ENCODE measurements at regions of chr18 and their contacts with region 1.

Region 1: DNA sequence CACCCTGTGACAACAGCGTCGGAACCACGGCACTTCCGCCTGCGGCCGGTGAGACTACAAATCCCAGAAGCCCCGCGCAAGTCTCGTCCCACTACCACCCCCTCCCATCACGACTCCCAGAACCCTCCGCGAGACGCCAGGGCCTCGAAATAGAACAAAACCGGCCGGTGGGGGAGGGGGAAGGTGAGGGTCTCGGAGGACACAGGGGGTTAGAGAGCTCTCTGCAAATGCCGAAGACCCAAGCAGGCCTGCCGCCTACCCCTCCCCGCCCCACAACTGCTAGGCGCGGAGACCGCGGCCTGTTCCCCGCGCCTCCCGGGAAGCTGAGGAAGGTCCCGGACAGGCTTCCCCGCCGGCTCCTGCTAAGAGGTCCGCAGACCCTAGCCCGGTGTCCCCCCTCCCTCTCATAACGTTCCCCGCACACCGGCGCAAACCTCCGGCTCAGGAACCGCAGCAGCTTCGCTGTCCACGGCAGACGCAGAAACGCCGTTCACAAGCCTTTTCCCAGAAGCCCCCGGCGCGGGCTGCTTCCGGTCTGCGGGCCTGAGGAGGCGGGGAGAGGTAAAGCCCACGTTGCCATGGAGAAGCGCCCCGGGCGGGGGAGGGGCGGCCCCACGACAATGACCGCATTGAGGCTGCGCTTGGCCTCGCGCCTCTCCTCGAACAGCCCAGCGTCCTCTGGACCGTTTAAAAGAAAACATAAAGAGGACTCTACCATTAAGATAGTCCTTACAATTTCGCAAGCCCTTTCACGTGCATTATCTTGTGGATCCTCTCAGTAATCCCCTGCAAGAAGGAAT is at the start of gene ZNF24:
- DNase-seq: peak; percentile 74
- ATAC-seq: peak; percentile 91
- H3K4me3 ChIP-seq: peak within 1 kb of the TSS; percentile 70 to 85
- H3K27ac ChIP-seq: peak within 1 kb of the TSS; percentile 75
- H3K4me1 ChIP-seq: peaks cover 11 to 16% of the 10 kb centered on the region in 2 experiments; a peak in 3 of 4 replicates
- H3K27me3 ChIP-seq: no peaks in the 10 kb centered on the region
- CTCF ChIP-seq: no peak
- POLR2A ChIP-seq: no peak
- RAD21 ChIP-seq: no peak
- total RNA-seq, gene ZNF24: 54.7 TPM

Region 2: DNA sequence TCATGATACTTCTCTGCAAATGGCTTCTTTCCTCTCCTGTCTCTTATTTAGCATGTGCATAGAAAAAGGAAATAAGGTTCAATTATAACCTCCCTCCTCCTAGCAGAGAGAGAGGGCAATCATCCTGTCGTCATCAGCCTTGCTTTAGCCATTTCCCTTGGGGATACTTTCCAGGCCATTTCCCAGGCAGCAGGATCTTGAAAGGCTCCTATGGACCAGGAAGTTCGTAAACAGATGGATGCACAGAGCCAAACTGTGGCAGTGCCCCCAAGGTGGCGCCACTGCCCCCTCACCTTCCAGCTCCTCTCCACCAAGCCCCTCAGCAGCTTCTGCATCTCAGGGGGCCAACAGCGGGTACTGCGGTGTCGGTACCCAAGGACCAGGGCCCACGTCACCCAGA is 476.6 kb before region 1 on chr18:
- CTCF ChIA-PET with region 1: no interaction called
- POLR2A ChIA-PET with region 1: no interaction called
- RAD21 ChIA-PET with region 1: no interaction called
- intact Hi-C with region 1: loop called (anchors 10 kb)
- DNase-seq: peak; percentile 18
- ATAC-seq: peak; percentile 86
- H3K4me3 ChIP-seq: no peak overlapping the region
- H3K27ac ChIP-seq: no peak overlapping the region
- H3K4me1 ChIP-seq: no peaks in the 10 kb centered on the region
- H3K27me3 ChIP-seq: no peaks in the 10 kb centered on the region
- CTCF ChIP-seq: peak in 2 of 3 experiments; percentile 47 to 63; a peak in 4 of 6 replicates
- POLR2A ChIP-seq: no peak
- RAD21 ChIP-seq: peak; percentile 28; the same call in 1 of the 2 replicates

Region 3: DNA sequence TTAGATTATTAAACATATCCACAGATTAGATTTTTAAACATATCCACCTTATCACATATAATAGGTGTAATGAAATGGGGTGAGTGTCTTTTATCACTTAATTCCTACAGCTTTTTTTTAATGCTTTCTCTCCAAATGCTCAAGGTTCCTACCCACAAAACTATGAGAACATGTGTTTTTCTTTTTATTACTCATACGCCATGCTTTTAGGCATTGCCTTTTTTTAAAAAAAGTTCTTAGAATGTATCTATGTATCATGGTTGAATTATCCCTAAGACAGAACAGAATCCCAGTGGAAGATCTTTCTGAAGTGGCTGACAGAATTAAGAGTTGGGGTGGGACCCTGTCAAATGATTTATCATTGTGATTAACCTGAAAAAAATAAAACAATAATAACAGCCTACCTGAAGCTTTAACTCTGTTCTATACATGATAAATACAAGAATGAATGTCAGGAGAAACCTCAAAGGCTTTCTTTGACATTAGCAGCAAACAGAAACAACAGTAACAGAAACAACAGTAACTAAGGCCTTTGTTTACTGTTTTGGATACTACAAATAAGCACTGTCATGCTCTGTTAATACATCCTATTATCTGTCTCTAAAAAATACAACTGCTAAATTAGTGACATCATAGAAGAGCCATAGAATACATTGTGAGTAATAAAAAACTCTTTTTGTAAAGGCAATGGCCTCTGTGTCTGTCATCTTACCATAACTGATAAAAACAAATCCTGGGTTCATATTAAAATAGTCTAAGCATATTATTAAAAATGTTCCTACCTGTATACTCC is 107.4 kb before region 1 on chr18:
- CTCF ChIA-PET with region 1: no interaction called
- POLR2A ChIA-PET with region 1: no interaction called
- RAD21 ChIA-PET with region 1: no interaction called
- intact Hi-C with region 1: loop called (anchors 5 kb)
- DNase-seq: no peak
- ATAC-seq: no peak
- H3K4me3 ChIP-seq: no peak overlapping the region
- H3K27ac ChIP-seq: no peak overlapping the region
- H3K4me1 ChIP-seq: peaks cover 4 to 6% of the 10 kb centered on the region in 2 experiments; a peak in 3 of 4 replicates
- H3K27me3 ChIP-seq: no peaks in the 10 kb centered on the region
- CTCF ChIP-seq: no peak
- POLR2A ChIP-seq: no peak
- RAD21 ChIP-seq: no peak

Region 4: DNA sequence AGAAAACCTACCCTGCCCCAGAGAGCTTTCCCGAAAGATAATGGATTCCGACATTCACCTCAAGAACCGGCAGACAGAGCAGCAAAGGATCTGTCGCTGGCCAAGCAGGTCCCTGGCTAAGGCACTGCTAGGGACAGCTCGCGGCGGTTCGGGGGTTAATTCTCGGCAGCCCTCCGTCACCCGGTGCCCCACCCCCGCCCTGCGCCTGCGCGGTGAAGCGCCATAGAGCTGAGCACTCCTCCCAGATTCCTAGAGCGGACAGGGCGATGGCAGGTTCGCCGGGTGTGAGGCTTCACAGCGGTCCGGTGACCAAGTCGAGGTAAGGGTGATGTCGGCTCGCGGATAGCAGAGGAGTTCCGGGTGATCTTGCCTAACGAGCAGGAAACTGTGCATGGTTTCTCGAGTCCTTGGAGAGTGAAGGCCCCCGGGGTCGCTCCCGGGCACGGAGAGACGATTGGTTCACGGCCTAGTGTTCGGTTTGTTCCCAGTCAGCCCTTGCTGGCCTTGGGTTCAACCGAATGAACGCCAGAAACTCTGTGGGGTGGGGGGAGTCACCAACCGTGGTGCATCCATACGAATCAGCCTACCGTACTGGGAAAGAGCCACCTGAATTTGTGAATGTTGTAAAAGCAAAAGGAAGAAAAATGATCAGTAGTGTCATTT is 53.9 kb before region 1 on chr18 and contains the start of gene ZSCAN30:
- CTCF ChIA-PET with region 1: no interaction called
- POLR2A ChIA-PET with region 1: no interaction called
- RAD21 ChIA-PET with region 1: no interaction called
- intact Hi-C with region 1: loop called (anchors 5 kb)
- DNase-seq: peak; percentile 91
- ATAC-seq: peak; percentile 98
- H3K4me3 ChIP-seq: peak within 1 kb of the TSS; percentile 71 to 87
- H3K27ac ChIP-seq: peak within 1 kb of the TSS; percentile 57
- H3K4me1 ChIP-seq: peaks cover 0 to 16% of the 10 kb centered on the region in 2 experiments; a peak in 2 of 4 replicates
- H3K27me3 ChIP-seq: no peaks in the 10 kb centered on the region
- CTCF ChIP-seq: no peak
- POLR2A ChIP-seq: no peak
- RAD21 ChIP-seq: no peak
- total RNA-seq, gene ZSCAN30: 11.5 TPM

Measured in HCT116 (cell line).